PC-9 (cell line): ENCODE measurements at regions of chr9 and their contacts with region 1.

Region 1: GRCh38 chr9:121463026-121463807 is 36.4 kb downstream of the GGTA1 start:
- DNase-seq: peak in 1 of 2 experiments; percentile 31
- H3K4me3 ChIP-seq: no peak overlapping the region
- H3K27ac ChIP-seq: no peak overlapping the region
- H3K4me1 ChIP-seq: no peaks in the 10 kb centered on the region
- H3K27me3 ChIP-seq: peaks cover 68% of the 10 kb centered on the region
- CTCF ChIP-seq: peak; percentile 69

Region 2: GRCh38 chr9:121498150-121498486 is 34.9 kb after region 1 on chr9:
- CTCF ChIA-PET with region 1: no interaction called
- POLR2A ChIA-PET with region 1: no interaction called
- intact Hi-C with region 1: loop called (anchors 5 kb)
- DNase-seq: peak; percentile 65 to 66
- H3K4me3 ChIP-seq: 0 out of 2 replicates have a peak overlapping the region, but pooled peaks have one; percentile 58
- H3K27ac ChIP-seq: no peak overlapping the region
- H3K4me1 ChIP-seq: peaks cover 16% of the 10 kb centered on the region
- H3K27me3 ChIP-seq: peaks cover 43% of the 10 kb centered on the region
- CTCF ChIP-seq: peak; percentile 72